Right lobe of liver (tissue), 6 donors: ENCODE measurements at regions of chr12 and their contacts with region 1.

Region 1: DNA sequence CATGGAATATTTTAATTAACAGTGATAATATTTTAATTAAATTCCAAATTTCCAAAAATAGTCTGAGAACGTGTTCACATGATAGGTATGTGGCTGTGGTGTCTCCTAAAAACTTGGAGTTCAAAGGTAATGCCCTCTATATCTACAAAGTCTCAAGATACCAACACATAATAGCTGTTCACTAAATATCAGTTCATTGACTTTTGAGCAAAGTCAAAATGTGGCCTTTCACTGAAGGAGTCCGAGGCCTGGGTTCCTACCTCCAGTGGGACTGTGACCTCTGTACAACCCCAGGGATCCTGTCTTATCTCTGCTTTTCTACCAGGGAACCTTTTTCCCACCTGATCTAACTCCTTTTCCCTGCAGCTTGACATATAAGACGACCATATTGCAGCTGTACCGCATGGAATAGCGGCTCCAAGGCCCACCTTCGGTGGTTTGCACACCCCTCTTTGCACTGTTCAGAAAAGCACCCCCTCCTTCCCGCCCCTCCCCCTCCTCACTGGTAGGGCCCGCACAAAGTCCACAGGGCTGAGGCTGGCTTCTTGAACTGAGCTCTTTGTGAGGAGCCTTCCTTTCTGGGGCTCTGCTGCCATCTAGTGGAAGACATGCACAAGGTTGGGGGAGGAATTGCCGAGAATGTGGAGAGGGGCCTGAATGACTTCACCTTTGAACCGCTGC is 3.1 kb downstream of the CCND2 start:
- DNase-seq: peak; percentile 73 to 82 (median 75)
- ATAC-seq: peak; percentile 70 to 77 (median 76)
- H3K4me3 ChIP-seq: no peak overlapping the region
- H3K27ac ChIP-seq: no peak overlapping the region
- H3K4me1 ChIP-seq: peaks cover 0 to 30% (median 0%) of the 10 kb centered on the region in 4 donors
- H3K27me3 ChIP-seq: peaks cover 0 to 25% of the 10 kb centered on the region in 2 donors
- CTCF ChIP-seq: peak; percentile 78 to 90 (median 82)
- POLR2A ChIP-seq: no peak

Region 2: GRCh38 chr12:3882896-3883564 is 393.6 kb before region 1 on chr12:
- intact Hi-C with region 1: loop called in 1 of 2 experiments (anchors 5 kb)
- DNase-seq: no peak
- ATAC-seq: peak; percentile 51 to 81 (median 72)
- H3K4me3 ChIP-seq: no peak overlapping the region
- H3K27ac ChIP-seq: no peak overlapping the region
- H3K4me1 ChIP-seq: no peaks in the 10 kb centered on the region
- H3K27me3 ChIP-seq: no peaks in the 10 kb centered on the region
- CTCF ChIP-seq: peak; percentile 20 to 50 (median 38)
- POLR2A ChIP-seq: no peak

Region 3: DNA sequence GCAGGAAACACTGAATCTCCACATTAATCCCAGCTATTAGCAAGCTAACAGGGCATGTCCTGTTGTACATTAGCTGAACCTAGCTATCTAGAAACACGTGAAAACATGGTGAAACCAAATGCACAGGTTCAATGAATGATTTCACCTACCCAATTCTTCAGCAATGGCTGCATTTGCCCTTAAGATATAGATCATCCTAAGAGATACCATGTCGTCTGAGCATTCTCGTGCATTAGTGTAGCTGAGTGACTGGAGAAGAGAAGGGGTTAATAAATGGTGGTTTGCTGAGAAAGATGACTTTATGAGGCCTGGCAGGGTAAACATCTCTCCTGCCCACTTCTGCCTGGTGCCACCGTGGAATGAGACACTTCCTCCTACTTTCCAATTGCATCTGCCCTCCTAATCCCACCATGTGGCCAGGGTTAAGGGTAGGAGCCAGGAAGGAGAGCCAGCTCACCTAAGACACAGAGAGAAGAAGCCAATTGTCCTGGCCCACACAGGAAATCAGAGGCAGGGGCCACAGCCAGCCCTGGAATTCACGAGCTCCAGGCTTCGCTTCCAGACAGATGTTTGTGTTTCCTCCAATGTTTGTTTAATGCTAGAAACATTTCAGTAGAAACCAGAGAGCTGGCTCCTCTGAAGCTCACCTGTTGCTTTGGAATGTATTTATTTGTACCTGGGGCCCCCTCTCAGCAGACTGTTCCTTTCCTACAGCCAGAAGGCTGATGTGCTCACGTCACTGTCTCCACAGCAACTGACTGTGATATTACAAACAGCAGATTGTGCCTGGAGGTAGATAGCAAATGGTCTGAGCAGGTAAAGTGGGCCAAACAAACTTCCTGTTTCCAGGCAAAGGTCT is 277.5 kb before region 1 on chr12:
- intact Hi-C with region 1: loop called in 1 of 2 experiments (anchors 10 kb)
- DNase-seq: no peak
- ATAC-seq: peak in 2 of 4 donors; percentile 65
- H3K4me3 ChIP-seq: no peak overlapping the region
- H3K27ac ChIP-seq: no peak overlapping the region
- H3K4me1 ChIP-seq: no peaks in the 10 kb centered on the region
- H3K27me3 ChIP-seq: no peaks in the 10 kb centered on the region
- CTCF ChIP-seq: no peak
- POLR2A ChIP-seq: no peak

Region 4: DNA sequence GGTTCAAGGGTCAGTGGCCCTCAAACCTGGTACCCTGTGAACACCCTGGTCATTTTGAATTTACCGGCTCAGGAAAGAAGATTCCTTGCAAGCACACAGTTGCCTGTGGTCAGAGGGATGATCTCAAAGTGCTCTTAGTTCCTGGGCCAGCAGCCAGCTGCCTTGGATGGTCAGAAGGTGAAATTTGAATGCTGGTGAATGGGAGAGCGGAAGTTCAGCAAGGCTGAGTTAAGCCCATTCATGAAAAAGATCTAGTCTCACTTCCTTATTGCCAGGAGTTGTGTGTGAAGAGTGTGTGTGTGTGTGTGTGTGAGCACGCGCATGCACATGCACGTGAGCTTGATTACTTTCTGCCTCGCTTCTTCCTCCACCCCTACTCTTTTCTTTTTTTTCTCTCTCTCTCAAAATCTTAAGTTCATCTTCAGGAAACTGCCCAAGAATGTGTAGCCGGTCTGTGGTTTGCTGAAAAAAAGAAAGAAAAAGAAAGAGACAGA is 158.6 kb before region 1 on chr12:
- intact Hi-C with region 1: loop called in 1 of 2 experiments (anchors 10 kb)
- DNase-seq: peak in 1 of 3 donors; percentile 46
- ATAC-seq: peak in 3 of 4 donors; percentile 56 to 78 (median 74)
- H3K4me3 ChIP-seq: no peak overlapping the region
- H3K27ac ChIP-seq: no peak overlapping the region
- H3K4me1 ChIP-seq: no peaks in the 10 kb centered on the region
- H3K27me3 ChIP-seq: no peaks in the 10 kb centered on the region
- CTCF ChIP-seq: no peak
- POLR2A ChIP-seq: no peak